ENCODE measurements at regions of chr20 and their contacts with region 1.

Region 1: DNA sequence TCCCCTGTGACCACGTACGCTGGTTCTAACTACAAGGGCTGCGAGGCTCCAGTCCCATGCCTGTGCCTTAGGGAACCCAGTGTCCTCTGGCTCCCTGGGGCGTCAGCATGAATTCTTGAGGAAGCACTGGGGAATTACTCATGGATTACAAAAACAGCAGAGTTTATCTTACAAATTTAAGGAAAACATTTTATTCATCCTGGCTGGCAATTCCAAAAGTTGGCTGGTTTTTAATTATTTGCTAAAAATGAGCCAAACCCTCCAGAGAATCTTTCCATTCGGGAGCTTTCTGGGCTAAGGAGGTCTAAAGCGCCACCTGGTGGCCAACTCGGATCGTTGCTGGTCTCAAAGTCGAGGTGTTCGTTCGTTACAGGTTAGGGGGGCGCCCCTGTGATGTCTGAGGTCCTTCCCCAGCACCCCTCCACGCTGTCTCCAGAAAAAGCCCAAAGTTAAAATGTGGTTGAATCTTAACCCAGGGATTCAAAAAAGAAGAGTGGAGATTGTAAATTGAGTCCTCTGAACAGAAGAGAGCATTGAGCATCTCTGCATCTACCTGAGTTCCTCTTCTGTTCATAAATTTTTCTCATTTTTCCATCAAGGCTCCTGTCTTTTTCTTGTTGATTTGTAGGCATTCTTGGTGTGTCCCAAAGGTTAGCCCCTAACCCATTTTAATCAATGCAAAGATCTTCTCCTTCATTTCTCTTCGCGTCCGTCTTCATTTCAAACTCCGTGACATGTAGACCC is 99.4 kb downstream of the BFSP1 start:
- DNase-seq: no peak
- H3K4me3 ChIP-seq: no peak overlapping the region
- H3K27me3 ChIP-seq: no peaks in the 10 kb centered on the region
- CTCF ChIP-seq: peak; percentile 84

Region 2: DNA sequence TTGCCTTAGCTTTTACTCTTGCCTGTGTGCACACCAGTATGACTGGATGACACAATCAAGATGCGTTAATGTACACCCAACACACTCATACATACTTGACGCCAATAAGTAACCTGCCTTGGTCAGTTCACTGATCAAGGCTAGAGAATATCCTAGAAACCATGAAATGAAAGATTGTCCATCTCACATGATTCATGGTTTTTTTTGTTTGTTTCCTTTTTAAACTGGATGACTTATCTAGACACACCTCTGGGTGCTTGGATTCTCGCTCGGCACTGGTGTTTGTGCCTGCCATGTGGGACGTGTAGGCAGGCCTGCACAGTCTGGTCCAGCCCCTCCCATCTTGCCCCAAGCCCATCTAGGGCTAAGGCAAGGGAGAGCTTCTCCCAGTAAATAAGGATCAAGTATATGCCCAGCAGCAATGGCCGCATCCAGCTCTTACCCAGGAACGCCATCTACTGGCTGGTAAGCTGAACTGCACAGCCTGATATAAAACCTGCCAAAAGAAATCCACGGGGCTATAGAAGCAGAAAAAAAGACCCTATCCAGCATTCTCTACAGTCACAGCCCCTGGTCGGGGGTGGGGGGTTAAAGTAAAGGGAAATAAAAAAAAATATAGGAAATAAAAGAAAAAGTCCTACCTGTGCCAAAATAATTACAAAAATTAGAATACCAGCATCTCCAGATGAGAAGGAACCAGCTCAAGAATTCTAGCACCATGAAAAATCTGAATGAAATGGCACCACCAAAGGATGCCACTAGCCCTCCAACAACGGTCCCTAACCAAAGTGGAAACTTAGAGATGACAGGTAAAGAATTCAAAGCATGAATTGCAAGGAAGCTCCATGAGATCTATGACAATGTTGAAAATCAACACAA is 610.3 kb before region 1 on chr20:
- CTCF ChIA-PET with region 1: interaction called, 13 read pairs
- POLR2A ChIA-PET with region 1: no interaction called
- DNase-seq: no peak
- H3K4me3 ChIP-seq: no peak overlapping the region
- H3K27me3 ChIP-seq: no peaks in the 10 kb centered on the region
- CTCF ChIP-seq: peak; percentile 95

Region 3: DNA sequence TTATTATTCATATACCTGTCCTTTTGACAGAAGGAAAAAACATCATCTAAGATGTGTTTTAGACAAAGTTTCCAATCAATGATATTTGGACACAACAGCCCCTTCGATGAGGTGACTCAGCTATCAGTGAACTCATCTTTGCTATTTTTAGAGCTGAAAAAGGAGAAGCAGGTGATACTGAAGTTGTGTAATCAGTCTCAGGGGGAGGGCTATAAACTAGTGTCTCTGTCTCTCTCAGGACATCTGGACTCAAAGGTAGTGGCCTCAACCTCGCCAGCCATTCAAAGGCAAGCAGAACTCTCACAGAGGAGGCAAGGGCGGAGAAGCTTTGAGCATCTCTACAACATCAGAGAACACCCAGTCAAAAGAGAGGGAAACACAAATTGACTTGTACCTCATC is 36.1 kb before region 1 on chr20:
- CTCF ChIA-PET with region 1: no interaction called
- POLR2A ChIA-PET with region 1: no interaction called
- DNase-seq: no peak
- H3K4me3 ChIP-seq: no peak overlapping the region
- H3K27me3 ChIP-seq: no peaks in the 10 kb centered on the region
- CTCF ChIP-seq: no peak

Region 4: DNA sequence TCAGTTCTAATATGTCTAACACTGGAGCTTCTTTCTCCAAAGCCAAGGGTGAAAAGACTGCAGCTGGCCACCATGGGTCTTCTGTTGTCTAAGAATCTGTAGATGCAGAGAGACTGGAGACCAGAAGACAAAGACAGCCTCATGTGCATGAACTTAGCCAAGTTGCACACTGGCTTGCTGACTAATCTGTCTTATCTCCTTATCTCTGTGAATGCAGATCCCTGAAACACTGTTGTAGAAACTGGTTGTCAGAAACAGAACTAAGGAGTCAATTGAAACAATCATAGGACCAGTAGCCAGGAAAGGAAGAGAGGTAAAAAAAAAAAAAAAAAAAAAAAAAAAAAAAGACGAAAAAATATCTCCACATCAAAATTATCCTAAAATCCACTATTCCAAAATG is 10.3 kb before region 1 on chr20:
- CTCF ChIA-PET with region 1: interaction called, 21 read pairs
- POLR2A ChIA-PET with region 1: no interaction called
- DNase-seq: no peak
- H3K4me3 ChIP-seq: no peak overlapping the region
- H3K27me3 ChIP-seq: no peaks in the 10 kb centered on the region; the same call in none of the 2 replicates
- CTCF ChIP-seq: no peak

Region 5: DNA sequence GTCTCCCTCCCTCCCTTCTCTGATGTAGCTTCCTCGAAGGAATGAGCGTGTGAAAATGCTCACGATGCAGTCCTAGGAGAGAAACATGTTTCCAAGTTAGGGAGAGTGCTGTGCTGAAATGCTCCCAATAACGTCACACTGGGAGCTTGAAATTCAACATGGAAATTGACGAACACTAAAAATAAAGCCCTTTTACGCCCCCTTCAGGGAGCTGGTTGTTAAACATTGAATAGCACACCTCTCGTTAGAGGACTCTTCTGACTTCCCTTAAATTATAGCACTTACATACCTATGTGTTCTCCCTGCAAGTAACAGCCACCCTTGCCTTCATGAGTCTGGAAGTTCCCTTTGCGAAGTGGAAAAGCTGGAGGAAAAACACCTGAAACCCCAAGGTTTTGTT is 10.8 kb after region 1 on chr20:
- CTCF ChIA-PET with region 1: interaction called, 15 read pairs
- POLR2A ChIA-PET with region 1: no interaction called
- DNase-seq: no peak
- H3K4me3 ChIP-seq: no peak overlapping the region
- H3K27me3 ChIP-seq: peaks cover 1% of the 10 kb centered on the region; the same call in 1 of the 2 replicates
- CTCF ChIP-seq: peak; percentile 10; the same call in 1 of the 2 replicates

Region 6: GRCh38 chr20:17504898-17505635 is 73.3 kb after region 1 on chr20:
- CTCF ChIA-PET with region 1: no interaction called
- POLR2A ChIA-PET with region 1: no interaction called
- DNase-seq: no peak
- H3K4me3 ChIP-seq: peak overlapping the region; percentile 50
- H3K27me3 ChIP-seq: no peaks in the 10 kb centered on the region
- CTCF ChIP-seq: peak; percentile 54

Region 7: GRCh38 chr20:17619351-17620093 is 187.7 kb after region 1 on chr20:
- CTCF ChIA-PET with region 1: no interaction called
- POLR2A ChIA-PET with region 1: no interaction called
- DNase-seq: no peak
- H3K4me3 ChIP-seq: no peak overlapping the region
- H3K27me3 ChIP-seq: no peaks in the 10 kb centered on the region
- CTCF ChIP-seq: no peak

Measured in BJ (cell line).